AG04450 (cell line): ENCODE measurements at regions of chr15 and their contacts with region 1.

Region 1: DNA sequence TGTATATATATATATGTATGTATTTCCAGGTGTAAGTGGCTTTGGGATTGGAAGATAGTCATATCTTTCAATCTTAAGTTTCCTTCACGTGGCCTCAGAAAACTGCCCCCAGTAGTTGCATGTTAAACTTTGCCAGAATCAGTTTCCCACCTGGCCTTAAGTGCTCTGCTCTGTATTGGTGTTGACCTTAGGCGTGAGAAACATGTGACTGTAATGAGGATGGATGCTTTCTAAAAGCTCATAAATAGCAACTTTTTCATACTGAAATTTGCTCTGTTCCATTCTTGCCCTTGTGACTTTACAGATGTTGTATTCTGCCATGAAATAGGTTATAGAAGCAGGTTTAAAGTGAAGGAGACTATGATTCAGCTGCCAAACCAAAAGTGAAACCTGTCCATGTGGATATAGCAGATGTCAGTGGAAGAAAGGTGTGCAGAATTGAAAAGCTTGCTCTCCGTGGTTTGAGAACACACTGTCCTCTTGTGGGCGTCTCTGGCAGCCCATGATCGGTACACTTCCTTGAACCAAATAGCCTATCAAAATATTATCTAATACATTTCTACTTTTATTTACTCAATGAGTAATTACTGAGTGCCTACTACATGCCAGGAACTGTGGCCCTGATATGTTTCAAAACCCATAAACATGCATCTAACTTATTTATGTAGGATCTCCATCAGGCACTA is 15.8 kb downstream of the SCG5 start:
- DNase-seq: no peak
- H3K4me3 ChIP-seq: no peak overlapping the region
- H3K27ac ChIP-seq: no peak overlapping the region
- H3K27me3 ChIP-seq: no peaks in the 10 kb centered on the region
- CTCF ChIP-seq: no peak

Region 2: GRCh38 chr15:32669896-32670619 is 12.7 kb after region 1 on chr15:
- CTCF ChIA-PET with region 1: interaction called, 15 read pairs
- POLR2A ChIA-PET with region 1: interaction called, 3 read pairs
- DNase-seq: no peak
- H3K4me3 ChIP-seq: no peak overlapping the region
- H3K27ac ChIP-seq: no peak overlapping the region
- H3K27me3 ChIP-seq: no peaks in the 10 kb centered on the region
- CTCF ChIP-seq: no peak

Region 3: DNA sequence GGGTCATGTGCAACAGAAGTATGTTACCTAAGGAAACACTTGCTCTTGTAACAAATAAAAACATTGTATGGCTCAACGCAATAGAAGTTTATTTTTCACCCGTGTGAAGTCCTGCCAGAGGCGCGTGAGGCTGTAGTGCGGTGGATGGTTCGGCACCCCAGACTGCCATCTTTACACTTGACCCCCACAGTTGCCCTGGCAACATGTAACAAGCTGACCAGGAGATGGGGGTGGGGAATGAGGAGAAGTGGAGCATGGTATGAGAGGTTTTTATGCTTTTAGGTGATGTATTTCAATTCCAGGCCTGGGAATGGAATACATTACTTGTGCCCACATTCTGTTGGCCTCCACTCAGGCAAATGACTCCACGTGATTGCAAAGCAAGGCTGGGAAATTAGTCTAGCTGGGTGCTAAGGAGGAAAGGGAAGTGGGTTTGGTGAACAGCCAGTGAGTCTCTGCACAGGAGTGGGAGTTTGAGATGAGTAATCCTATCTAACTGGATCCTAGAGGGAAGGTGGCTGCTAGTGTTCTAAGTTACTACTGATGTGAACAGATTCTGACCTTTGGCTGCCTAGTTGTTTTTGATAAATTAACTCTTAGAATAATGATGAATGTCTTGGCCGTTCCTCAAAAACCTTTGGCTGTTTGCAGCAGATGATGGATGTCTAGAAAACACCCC is 26.7 kb after region 1 on chr15:
- CTCF ChIA-PET with region 1: interaction called, 14 read pairs
- POLR2A ChIA-PET with region 1: interaction called, 9 read pairs
- DNase-seq: peak; percentile 61
- H3K4me3 ChIP-seq: no peak overlapping the region
- H3K27ac ChIP-seq: peak overlapping the region; percentile 65
- H3K27me3 ChIP-seq: no peaks in the 10 kb centered on the region
- CTCF ChIP-seq: no peak

Region 4: GRCh38 chr15:32717426-32718226 is 60.3 kb after region 1 on chr15 and contains the start of gene GREM1:
- CTCF ChIA-PET with region 1: interaction called, 37 read pairs
- POLR2A ChIA-PET with region 1: interaction called, 3 read pairs
- DNase-seq: no peak
- H3K4me3 ChIP-seq: peak within 1 kb of the TSS; percentile 92
- H3K27ac ChIP-seq: peak within 1 kb of the TSS; percentile 96
- H3K27me3 ChIP-seq: no peaks in the 10 kb centered on the region
- CTCF ChIP-seq: no peak
- polyA plus RNA-seq, gene GREM1: 2,326 and 2,858 TPM in 2 replicates

Region 5: DNA sequence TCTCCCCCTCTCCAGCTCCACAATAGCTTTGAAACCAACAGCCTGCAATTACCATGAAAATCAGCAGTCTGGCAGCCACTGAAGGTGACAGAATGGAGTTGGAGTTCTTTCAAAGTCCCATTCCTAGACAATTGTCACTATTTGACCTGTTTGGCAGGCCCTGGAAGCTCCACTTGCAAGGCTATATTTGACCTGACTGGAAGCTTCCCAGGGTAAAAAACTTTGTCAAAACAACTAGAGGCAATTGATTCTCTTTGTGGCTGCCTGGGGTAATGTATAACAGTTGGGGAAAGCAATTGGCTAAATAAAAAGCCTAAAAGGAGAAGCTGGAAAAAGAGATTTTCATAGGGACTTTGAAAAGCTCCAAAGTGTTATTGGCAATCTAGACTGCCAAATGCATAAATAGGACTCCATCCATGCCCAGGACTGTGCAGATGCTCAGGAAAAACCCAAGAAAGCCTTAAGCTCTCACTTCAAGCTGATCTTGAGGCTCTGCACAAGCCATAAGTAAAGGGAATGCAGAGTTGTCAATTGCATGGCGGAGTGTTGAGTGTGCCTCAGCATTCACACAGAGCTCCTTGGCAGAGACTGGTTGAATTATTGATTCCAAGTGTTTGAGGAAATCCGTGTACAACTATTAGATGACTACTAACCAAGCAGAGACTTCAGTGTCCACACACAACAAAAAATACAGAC is 78.8 kb after region 1 on chr15:
- CTCF ChIA-PET with region 1: interaction called, 11 read pairs
- POLR2A ChIA-PET with region 1: interaction called, 4 read pairs
- DNase-seq: no peak
- H3K4me3 ChIP-seq: no peak overlapping the region
- H3K27ac ChIP-seq: no peak overlapping the region
- H3K27me3 ChIP-seq: no peaks in the 10 kb centered on the region
- CTCF ChIP-seq: no peak

Region 6: GRCh38 chr15:32994810-32995424 is 337.6 kb after region 1 on chr15:
- CTCF ChIA-PET with region 1: interaction called, 153 read pairs
- POLR2A ChIA-PET with region 1: no interaction called
- DNase-seq: no peak
- H3K4me3 ChIP-seq: no peak overlapping the region
- H3K27ac ChIP-seq: no peak overlapping the region
- H3K27me3 ChIP-seq: no peaks in the 10 kb centered on the region
- CTCF ChIP-seq: peak; percentile 70

Region 7: GRCh38 chr15:33179874-33180273 is 522.5 kb after region 1 on chr15:
- CTCF ChIA-PET with region 1: no interaction called
- POLR2A ChIA-PET with region 1: no interaction called
- DNase-seq: no peak
- H3K4me3 ChIP-seq: no peak overlapping the region
- H3K27ac ChIP-seq: no peak overlapping the region
- H3K27me3 ChIP-seq: peaks cover 9% of the 10 kb centered on the region
- CTCF ChIP-seq: no peak